Gastrocnemius medialis (tissue), 4 donors: ENCODE measurements at regions of chr17 and their contacts with region 1.

Region 1: DNA sequence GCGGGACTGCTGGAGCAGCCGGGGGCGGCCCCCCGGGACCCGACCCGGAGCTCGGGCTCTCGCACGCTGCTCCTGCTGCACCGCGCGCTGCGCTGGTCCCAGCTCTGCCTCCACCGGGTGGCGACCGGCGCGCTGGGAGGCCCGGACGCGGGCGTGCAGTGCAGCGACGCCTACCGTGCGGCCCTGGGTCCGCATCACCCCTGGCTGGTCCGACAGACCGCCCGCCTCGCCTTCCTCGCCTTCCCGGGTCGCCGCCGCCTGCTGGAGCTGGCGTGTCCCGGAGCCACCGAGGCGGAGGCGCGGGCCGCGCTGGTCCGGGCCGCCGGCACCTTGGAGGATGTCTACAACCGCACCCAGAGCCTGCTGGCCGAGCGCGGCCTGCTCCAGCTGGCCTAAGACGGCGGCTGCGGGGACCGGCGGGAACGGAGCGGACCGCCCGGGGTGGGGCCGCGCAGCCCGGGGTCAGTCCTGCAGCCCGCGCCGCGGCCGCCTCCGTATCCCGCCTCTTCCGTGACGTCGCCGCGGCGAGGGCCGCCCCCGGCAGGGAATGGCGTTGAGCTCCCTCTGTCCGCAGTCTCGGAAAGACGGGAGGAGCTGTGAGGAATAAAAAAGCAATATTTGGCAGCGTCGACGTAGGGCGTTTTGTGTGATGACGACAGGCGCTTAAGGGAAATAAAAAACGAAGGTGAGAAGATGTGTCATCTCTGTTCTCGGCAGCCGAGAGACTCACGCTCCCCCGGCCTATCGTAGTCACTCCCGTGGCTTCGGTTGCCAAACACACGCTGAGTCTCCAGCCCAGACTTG is 1.3 kb downstream of the GLTPD2 start:
- DNase-seq: peak; percentile 63 to 78
- ATAC-seq: peak; percentile 92 to 94
- H3K4me3 ChIP-seq: peak overlapping the region; percentile 63 to 81 (median 68)
- H3K27ac ChIP-seq: peak overlapping the region; percentile 91 to 97 (median 95)
- H3K4me1 ChIP-seq: peaks cover 36 to 43% of the 10 kb centered on the region in 2 donors
- H3K27me3 ChIP-seq: peaks cover 8 to 20% (median 13%) of the 10 kb centered on the region in 3 donors
- CTCF ChIP-seq: peak; percentile 68 to 93 (median 90)
- POLR2A ChIP-seq: peak; percentile 83 to 88

Region 2: DNA sequence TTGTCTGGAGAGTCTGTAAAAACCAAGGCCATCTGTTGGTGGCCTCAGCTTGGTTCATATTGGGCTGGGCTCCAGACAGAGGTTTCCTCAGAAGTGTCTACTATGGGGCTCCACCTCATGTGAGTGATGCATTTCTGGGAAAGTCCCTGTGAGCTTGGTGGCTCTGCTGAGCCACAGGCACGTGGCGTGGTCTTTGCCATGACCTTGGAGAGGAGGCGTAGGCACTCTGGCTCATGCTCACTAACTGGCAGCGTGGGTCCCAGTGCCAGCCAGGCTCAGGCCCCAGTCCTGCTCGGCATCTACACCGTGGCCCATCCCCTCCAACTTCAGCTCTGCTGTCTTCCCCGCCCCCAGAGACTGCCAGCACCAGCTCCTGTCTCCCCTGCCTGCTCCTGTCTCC is 216.4 kb before region 1 on chr17:
- in situ Hi-C with region 1: no loop called
- intact Hi-C with region 1: loop called (anchors 10 kb)
- DNase-seq: peak; percentile 74 to 92
- ATAC-seq: peak; percentile 76 to 79
- H3K4me3 ChIP-seq: no peak overlapping the region
- H3K27ac ChIP-seq: peak overlapping the region; percentile 78 to 84 (median 82)
- H3K4me1 ChIP-seq: peaks cover 36 to 42% of the 10 kb centered on the region in 2 donors
- H3K27me3 ChIP-seq: no peaks in the 10 kb centered on the region
- CTCF ChIP-seq: no peak
- POLR2A ChIP-seq: peak; percentile 51 to 63

Region 3: GRCh38 chr17:4591529-4591928 is 198.6 kb before region 1 on chr17:
- in situ Hi-C with region 1: no loop called
- intact Hi-C with region 1: no loop called
- DNase-seq: peak; percentile 57 to 80
- ATAC-seq: peak; percentile 30 to 46
- H3K4me3 ChIP-seq: peak overlapping the region in 2 of 4 donors; percentile 26 to 34
- H3K27ac ChIP-seq: peak overlapping the region; percentile 90 to 100 (median 98)
- H3K4me1 ChIP-seq: peaks cover 73 to 79% of the 10 kb centered on the region in 2 donors
- H3K27me3 ChIP-seq: no peaks in the 10 kb centered on the region
- CTCF ChIP-seq: no peak
- POLR2A ChIP-seq: peak; percentile 73 to 86

Region 4: GRCh38 chr17:4739122-4740024 is 50.7 kb before region 1 on chr17 and contains the starts of genes CXCL16 and ZMYND15:
- in situ Hi-C with region 1: loop called in 1 of 4 experiments (anchors 10 kb)
- intact Hi-C with region 1: no loop called
- DNase-seq: peak in 1 of 2 donors; percentile 19
- ATAC-seq: peak; percentile 51 to 53
- H3K4me3 ChIP-seq: peak within 1 kb of the TSS; percentile 71 to 85 (median 80)
- H3K27ac ChIP-seq: peak within 1 kb of the TSS in 1 of 4 donors; percentile 19
- H3K4me1 ChIP-seq: peaks cover 4 to 15% of the 10 kb centered on the region in 2 donors
- H3K27me3 ChIP-seq: peaks cover 17 to 42% (median 36%) of the 10 kb centered on the region in 3 donors
- CTCF ChIP-seq: no peak
- POLR2A ChIP-seq: peak; percentile 10 to 22
- total RNA-seq, gene CXCL16: 1.2 to 2.1 (median 1.4) TPM
- total RNA-seq, gene ZMYND15: not detected

Region 5: DNA sequence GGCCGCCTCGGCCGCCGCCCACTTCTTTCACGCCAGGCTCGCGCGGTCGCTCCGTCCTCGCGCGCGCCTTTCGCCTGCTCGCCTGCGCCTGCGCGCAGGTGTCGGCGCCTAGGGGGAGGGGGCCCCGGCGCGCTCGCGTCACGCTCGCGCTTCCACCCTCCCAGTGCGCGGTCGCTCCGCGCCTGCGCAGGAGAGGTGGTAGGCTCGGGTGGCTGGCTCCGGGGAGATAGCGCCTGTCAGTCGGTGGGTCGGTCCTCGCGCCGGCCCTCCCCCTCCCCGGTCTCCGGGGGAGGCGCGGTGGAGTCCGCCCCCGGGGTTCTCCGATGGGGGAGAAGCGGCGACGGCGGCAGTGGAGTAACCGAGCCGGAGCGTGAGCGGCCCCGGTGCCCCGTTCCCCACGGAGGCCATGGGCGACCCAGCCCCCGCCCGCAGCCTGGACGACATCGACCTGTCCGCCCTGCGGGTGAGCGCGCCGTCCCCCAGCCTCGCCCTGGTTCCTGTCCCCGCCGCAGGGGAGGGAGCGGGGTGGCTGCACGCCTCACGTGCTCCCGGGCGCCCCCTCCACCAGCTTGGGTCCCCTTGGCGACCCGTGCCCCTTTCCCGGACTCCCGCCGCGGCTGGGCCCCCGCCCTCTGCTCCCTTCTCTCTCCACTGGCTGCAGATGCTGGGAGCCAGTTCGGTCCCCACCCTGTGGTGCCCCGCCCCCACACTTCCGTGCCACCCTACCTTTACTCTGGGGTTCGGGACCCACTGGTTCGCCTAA is 43.3 kb after region 1 on chr17 and contains the start of gene MINK1:
- in situ Hi-C with region 1: no loop called
- intact Hi-C with region 1: loop called (anchors 2 kb)
- DNase-seq: peak; percentile 78 to 88
- ATAC-seq: peak; percentile 95 to 96
- H3K4me3 ChIP-seq: peak within 1 kb of the TSS; percentile 74 to 89 (median 80)
- H3K27ac ChIP-seq: peak within 1 kb of the TSS; percentile 83 to 96 (median 89)
- H3K4me1 ChIP-seq: peaks cover 19 to 34% of the 10 kb centered on the region in 2 donors
- H3K27me3 ChIP-seq: no peaks in the 10 kb centered on the region
- CTCF ChIP-seq: no peak
- POLR2A ChIP-seq: peak; percentile 91 to 93
- total RNA-seq, gene MINK1: 11.7 to 20.2 (median 15.3) TPM

Region 6: GRCh38 chr17:4843321-4844000 is 53.4 kb after region 1 on chr17:
- in situ Hi-C with region 1: no loop called
- intact Hi-C with region 1: no loop called
- DNase-seq: no peak
- ATAC-seq: no peak
- H3K4me3 ChIP-seq: no peak overlapping the region
- H3K27ac ChIP-seq: no peak overlapping the region
- H3K4me1 ChIP-seq: peaks cover 2 to 9% of the 10 kb centered on the region in 2 donors
- H3K27me3 ChIP-seq: no peaks in the 10 kb centered on the region
- CTCF ChIP-seq: no peak
- POLR2A ChIP-seq: no peak

Region 7: GRCh38 chr17:4891411-4892342 is 101.6 kb after region 1 on chr17:
- in situ Hi-C with region 1: loop called (anchors 5 to 25 kb)
- intact Hi-C with region 1: loop called (anchors 1 kb)
- DNase-seq: no peak
- ATAC-seq: no peak
- H3K4me3 ChIP-seq: no peak overlapping the region
- H3K27ac ChIP-seq: no peak overlapping the region
- H3K4me1 ChIP-seq: no peaks in the 10 kb centered on the region
- H3K27me3 ChIP-seq: no peaks in the 10 kb centered on the region
- CTCF ChIP-seq: no peak
- POLR2A ChIP-seq: no peak

Region 8: GRCh38 chr17:4934173-4934979 is 144.3 kb after region 1 on chr17:
- in situ Hi-C with region 1: no loop called
- intact Hi-C with region 1: no loop called
- DNase-seq: no peak
- ATAC-seq: no peak
- H3K4me3 ChIP-seq: no peak overlapping the region
- H3K27ac ChIP-seq: peak overlapping the region in 3 of 4 donors; percentile 14 to 48 (median 36)
- H3K4me1 ChIP-seq: peaks cover 32 to 40% of the 10 kb centered on the region in 2 donors
- H3K27me3 ChIP-seq: no peaks in the 10 kb centered on the region
- CTCF ChIP-seq: no peak
- POLR2A ChIP-seq: no peak